AG04450 (cell line): ENCODE measurements at regions of chr4 and their contacts with region 1.

Region 1: GRCh38 chr4:144141493-144141892 is 975 bp upstream of the GYPA start:
- DNase-seq: no peak
- H3K4me3 ChIP-seq: no peak overlapping the region
- H3K27ac ChIP-seq: no peak overlapping the region
- H3K27me3 ChIP-seq: no peaks in the 10 kb centered on the region
- CTCF ChIP-seq: no peak

Region 2: GRCh38 chr4:143819029-143819428 is 322.5 kb before region 1 on chr4:
- CTCF ChIA-PET with region 1: no interaction called
- POLR2A ChIA-PET with region 1: no interaction called
- DNase-seq: no peak
- H3K4me3 ChIP-seq: no peak overlapping the region
- H3K27ac ChIP-seq: no peak overlapping the region
- H3K27me3 ChIP-seq: no peaks in the 10 kb centered on the region
- CTCF ChIP-seq: no peak

Region 3: DNA sequence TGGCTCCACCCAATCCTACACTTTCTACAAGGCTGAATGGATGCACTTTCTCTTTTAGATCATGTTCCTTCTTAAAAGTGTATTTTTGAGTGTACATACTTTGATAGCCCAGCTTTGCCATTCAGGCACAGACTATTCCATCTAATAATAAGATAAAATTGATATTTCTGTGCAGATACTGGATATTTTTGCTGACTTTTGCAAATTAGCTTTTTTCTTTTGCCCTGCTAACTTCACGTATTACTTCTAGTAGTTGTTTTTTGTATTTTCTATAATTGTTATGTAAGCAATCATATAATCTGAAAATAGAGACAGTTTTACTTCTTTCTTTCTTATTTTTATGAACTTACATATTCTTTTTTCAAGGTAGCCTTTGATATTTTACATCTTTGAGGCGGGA is 12.6 kb after region 1 on chr4:
- CTCF ChIA-PET with region 1: no interaction called
- POLR2A ChIA-PET with region 1: no interaction called
- DNase-seq: no peak
- H3K4me3 ChIP-seq: no peak overlapping the region
- H3K27ac ChIP-seq: no peak overlapping the region
- H3K27me3 ChIP-seq: no peaks in the 10 kb centered on the region
- CTCF ChIP-seq: no peak

Region 4: DNA sequence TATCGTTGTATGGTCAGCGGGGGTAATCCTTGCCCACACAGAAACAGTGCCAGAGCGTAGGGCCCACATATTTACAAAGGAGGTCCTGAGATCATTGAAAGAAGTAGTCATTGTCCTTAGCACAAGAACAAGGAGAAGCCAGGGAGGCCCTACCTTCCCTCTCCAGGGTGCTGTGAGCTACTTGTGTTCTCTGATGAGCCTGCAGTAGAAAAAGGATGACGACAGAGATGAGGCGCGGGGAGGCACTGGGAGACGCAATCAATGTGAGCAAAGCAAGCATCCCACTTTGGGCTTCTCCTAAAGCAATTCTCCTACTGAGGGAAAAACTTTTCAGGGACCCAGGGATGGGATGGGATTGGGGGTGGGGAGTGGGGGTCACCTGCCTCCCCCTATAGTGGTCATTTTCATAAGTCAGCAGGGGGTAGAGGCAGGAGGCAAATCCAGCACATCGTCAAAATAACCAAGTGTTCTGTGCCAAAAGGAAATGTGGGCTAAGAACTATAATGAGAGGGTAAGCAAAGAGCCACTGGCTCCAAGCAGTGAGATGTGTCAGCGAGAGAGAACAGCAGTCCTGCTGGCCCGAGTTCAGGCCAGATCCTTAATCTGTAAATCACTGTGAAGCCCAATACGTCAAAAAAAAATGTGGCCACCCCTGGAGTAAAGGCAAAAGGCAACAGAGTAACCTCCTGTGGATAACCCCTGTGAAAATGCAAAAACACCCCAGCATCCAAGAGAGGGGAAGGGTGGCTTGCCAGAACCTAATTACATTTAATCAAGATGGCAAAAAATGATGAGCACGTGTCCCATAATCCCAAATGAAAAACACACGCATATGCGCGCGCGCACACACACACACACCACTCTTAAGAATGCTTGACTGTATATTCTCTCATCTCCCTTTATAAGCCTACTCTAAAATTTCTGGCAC is 367.9 kb after region 1 on chr4:
- CTCF ChIA-PET with region 1: interaction called, 10 read pairs
- POLR2A ChIA-PET with region 1: no interaction called
- DNase-seq: no peak
- H3K4me3 ChIP-seq: no peak overlapping the region
- H3K27ac ChIP-seq: no peak overlapping the region
- H3K27me3 ChIP-seq: peaks cover 3% of the 10 kb centered on the region
- CTCF ChIP-seq: no peak